GM13977 (cell line): ENCODE measurements at regions of chr1 and their contacts with region 1.

Region 1: DNA sequence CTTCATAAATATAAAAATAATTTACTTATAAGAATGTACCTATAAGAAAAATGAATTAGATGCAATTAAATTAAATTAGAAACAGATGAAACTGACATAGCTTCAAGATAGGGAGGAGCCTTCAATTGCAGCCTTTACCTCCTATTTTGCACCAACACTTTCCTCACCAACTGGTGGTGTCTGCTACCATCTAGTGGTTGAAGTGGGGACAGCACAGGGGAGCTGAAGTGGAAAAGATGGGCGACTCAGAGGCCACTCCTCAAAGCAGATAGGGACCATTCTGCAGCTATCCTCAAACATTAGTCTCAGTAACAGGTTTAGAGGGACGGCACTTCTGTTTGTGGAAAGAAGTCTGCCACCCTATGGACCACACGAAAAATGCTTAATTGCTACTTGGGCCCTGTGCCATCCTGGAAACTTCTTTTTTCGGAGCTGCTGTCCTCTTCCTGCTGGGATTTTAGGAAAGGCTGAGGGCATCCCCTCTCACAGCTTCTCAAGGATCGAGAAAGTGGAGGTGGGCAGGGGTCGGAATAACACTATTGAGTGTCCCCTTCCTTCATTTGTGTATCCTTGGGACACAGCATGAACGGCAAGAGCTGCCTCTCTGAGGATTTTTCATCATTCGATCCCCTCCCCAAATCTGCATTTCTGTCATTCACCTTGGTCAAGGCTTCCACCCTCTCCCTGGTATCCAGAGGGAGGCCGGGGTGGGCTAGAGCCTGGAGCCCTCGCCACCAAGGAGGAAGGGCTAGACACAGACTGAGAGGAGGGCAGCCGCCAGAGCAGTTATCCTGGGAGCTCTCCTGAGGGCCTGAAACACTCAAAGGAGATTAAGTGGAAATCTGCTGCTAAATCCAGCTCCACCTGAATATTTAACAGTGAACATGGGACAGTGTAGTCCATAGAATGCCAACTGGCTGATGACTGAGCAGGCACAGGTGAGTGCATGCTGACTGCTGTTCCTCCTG is 9.6 kb downstream of the PROK1 start:
- DNase-seq: peak; percentile 84
- CTCF ChIP-seq: peak; percentile 92

Region 2: GRCh38 chr1:110209715-110210603 is 250.6 kb before region 1 on chr1 and contains the start of gene KCNC4:
- in situ Hi-C with region 1: loop called (anchors 10 kb)
- DNase-seq: peak; percentile 96
- CTCF ChIP-seq: no peak

Region 3: GRCh38 chr1:110412576-110412975 is 48.0 kb before region 1 on chr1:
- in situ Hi-C with region 1: loop called (anchors 5 kb)
- DNase-seq: peak; percentile 65
- CTCF ChIP-seq: peak; percentile 92